ENCODE measurements at regions of chr3 and their contacts with region 1.

Region 1: DNA sequence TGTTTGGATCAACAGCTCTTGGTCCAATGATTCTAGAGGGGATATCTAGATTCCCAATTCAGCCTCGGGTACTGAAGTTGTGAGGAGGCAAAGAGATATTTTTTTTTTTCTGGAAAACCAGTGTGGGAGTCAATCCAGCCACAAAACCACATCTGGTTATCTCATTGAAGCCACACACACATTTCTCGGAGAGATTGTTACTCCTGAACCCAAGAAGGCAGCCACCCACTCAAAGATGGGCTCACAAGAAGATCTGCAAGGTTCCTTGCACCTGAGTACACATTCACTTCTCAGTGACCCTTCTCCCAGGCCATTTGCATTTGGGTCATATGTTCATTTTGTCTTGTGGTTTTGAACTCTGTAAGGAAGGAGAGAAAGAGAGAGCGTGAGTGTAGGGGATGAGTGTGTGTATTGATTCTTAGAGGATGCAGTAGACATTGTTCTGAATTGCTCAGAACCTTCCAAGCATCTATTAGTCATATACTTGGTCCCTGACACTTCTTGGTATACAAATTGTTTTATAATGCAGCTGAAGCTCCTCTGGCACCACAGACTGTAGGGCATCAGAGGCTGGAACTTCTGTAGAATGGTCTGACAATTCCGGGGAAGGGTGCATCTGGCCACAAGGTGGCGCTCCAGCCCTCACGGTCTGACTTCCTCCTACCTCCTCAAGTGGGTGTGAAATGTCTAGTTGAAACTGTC is 39.3 kb upstream of the TRA2B start:
- DNase-seq: peak; percentile 90
- ATAC-seq: peak; percentile 94
- H3K4me3 Mint-ChIP-seq: no peak overlapping the region
- H3K27ac Mint-ChIP-seq: no peak overlapping the region
- H3K4me1 Mint-ChIP-seq: no peaks in the 10 kb centered on the region
- H3K27me3 Mint-ChIP-seq: no peaks in the 10 kb centered on the region
- CTCF ChIP-seq: peak; percentile 92

Region 2: DNA sequence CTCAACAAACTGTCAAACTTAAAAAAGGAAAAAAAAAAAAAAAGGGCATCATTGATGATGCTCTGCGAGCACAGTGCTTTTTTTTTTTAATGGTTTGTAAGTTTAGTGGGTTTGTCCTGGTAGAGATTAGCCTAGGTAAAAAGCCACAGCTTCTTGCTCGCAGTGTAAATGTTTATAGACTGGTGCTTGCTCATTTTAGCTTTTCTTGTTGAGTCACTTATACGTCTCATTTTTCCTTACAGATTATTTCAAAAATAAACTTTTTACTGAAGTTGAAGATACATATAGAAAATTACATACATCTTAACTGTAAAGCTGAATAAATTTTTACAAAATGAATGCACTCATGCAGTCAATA is 22.8 kb before region 1 on chr3:
- CTCF ChIA-PET with region 1: interaction called, 24 read pairs
- POLR2A ChIA-PET with region 1: no interaction called
- DNase-seq: no peak
- ATAC-seq: no peak
- H3K4me3 Mint-ChIP-seq: no peak overlapping the region
- H3K27ac Mint-ChIP-seq: no peak overlapping the region
- H3K4me1 Mint-ChIP-seq: peaks cover 13% of the 10 kb centered on the region
- H3K27me3 Mint-ChIP-seq: no peaks in the 10 kb centered on the region
- CTCF ChIP-seq: no peak

Region 3: GRCh38 chr3:186277268-186277909 is 300.3 kb after region 1 on chr3:
- CTCF ChIA-PET with region 1: interaction called, 18 read pairs
- POLR2A ChIA-PET with region 1: no interaction called
- DNase-seq: no peak
- ATAC-seq: peak; percentile 98
- H3K4me3 Mint-ChIP-seq: no peak overlapping the region
- H3K27ac Mint-ChIP-seq: no peak overlapping the region
- H3K4me1 Mint-ChIP-seq: peaks cover 11% of the 10 kb centered on the region
- H3K27me3 Mint-ChIP-seq: no peaks in the 10 kb centered on the region; the same call in 1 of the 2 replicates
- CTCF ChIP-seq: no peak

Measured in WTC11 (cell line).